ENCODE measurements at regions of chr1 and their contacts with region 1.

Region 1: DNA sequence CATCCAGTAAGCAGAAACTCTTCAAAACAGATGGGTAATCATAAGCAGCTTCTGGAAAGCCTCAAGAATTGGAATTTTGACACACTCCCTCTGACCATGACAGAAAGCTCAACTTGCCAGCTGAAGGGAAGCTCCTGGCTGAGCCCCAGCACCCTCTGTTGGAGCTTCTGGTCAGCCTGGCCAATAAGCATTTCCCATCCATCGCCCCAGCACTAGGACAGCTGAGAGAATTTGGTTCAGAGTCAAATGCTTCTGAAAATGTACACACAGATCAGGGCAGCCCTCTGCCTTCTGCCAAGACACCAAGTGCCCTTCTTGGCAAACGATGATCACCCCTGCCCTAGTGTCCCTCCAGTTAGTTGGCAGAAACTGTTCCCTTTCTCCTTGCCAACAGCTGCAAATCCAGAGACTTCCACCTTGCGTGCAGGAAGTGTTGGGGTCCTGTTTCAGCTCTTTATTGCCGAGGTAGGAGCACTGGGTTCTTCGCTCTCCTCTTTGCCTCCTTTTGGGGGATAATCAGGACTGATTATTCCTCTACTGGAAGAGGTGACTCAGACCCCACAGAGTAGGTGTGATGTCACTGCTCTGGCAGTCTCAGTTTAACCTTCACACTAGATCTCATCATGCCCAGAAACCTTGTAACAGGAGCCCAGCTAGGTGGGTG is 11.9 kb downstream of the PIGV start:
- DNase-seq: peak; percentile 48
- ATAC-seq: peak; percentile 78
- H3K4me3 Mint-ChIP-seq: no peak overlapping the region
- H3K27ac Mint-ChIP-seq: peak overlapping the region; percentile 90
- H3K4me1 Mint-ChIP-seq: peaks cover 37% of the 10 kb centered on the region
- H3K27me3 Mint-ChIP-seq: no peaks in the 10 kb centered on the region

Region 2: DNA sequence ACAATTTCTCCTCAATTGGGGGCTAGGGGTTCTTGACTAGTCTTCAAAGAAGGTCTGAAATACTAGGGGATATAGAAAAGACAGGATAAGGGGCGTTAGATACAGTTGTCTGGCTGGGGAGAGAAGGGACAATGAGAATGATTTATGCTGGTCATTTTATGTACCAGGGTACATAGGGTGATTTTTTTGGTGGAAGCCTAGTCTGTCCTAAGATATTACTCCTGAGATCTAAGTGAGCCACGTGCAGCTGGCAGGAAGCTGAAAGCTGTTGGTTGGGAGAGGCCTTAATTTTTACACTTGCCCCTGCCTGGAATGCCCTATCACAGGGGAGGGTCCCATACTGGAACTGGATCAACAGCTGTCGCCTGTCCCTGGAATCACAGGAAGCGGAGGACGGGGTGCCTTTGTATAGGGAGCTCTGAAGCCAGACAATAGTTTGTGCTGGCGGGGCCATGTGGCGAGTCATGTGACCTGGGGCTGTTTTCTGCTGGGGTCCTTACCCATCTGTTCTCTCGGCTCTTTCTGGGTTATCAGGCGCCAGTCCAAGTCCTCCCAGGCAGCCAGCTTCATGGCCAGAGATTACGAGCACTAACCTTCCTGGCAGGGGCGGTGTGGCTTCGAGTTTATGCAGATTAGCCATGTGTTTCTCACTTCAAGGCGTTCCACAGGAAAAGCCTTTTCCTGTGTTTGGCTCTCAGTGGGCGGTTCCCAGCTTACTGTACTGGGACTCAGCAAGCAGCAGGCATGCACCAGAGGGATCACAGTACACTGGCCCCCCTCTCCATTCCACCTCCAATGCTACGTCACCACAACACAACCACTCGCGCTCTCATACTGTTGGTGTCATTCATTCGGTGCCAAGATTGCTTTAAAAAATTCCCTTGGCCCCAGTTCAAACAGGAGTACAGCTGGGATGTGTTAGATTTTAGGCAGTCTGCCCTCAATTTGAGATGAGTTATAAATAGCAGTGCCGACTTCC is 76.3 kb before region 1 on chr1:
- CTCF ChIA-PET with region 1: no interaction called
- POLR2A ChIA-PET with region 1: no interaction called
- intact Hi-C with region 1: no loop called
- DNase-seq: peak; percentile 54
- ATAC-seq: peak; percentile 50
- H3K4me3 Mint-ChIP-seq: peak overlapping the region; percentile 34
- H3K27ac Mint-ChIP-seq: peak overlapping the region; percentile 82
- H3K4me1 Mint-ChIP-seq: peaks cover 95% of the 10 kb centered on the region
- H3K27me3 Mint-ChIP-seq: no peaks in the 10 kb centered on the region

Region 3: DNA sequence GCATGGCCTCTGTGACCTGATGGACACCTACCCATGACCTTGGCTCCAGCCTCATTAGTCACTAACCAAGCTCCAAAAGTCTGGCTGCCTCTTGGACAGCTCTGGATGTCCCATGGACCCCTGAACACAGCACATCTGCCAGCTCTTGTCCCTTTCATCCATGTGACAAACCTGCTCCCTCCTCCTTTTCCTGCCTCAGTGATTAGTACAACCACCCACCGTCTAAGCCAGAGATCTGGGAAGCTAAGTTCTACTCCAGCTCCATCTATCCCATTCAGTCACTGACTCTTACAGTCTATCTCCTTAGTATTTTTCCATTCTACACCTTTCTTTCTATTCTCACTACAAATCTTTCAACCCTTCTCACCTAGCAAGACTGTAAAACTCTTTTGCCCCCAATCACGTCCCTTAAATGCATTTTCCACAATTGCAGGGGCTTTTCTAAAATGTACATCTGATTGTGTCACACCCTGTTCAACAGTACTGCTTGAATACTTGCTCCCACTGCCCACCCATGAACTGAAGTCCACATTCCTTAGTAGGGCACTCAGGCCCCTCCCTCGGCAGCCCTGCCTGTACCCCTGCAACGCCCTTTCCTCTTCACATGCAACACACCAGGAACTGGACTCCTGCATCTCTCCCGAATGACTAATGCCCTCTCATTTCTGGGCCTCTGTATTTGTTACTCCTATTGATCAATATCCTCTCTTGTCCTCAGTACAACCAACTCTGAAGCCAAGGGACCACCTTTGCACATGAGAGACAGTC is 83.3 kb after region 1 on chr1:
- CTCF ChIA-PET with region 1: interaction called, 5 read pairs
- POLR2A ChIA-PET with region 1: interaction called, 11 read pairs
- intact Hi-C with region 1: loop called in 1 of 2 experiments (anchors 5 kb)
- DNase-seq: no peak
- ATAC-seq: no peak
- H3K4me3 Mint-ChIP-seq: no peak overlapping the region
- H3K27ac Mint-ChIP-seq: no peak overlapping the region
- H3K4me1 Mint-ChIP-seq: peaks cover 3% of the 10 kb centered on the region
- H3K27me3 Mint-ChIP-seq: no peaks in the 10 kb centered on the region

Region 4: DNA sequence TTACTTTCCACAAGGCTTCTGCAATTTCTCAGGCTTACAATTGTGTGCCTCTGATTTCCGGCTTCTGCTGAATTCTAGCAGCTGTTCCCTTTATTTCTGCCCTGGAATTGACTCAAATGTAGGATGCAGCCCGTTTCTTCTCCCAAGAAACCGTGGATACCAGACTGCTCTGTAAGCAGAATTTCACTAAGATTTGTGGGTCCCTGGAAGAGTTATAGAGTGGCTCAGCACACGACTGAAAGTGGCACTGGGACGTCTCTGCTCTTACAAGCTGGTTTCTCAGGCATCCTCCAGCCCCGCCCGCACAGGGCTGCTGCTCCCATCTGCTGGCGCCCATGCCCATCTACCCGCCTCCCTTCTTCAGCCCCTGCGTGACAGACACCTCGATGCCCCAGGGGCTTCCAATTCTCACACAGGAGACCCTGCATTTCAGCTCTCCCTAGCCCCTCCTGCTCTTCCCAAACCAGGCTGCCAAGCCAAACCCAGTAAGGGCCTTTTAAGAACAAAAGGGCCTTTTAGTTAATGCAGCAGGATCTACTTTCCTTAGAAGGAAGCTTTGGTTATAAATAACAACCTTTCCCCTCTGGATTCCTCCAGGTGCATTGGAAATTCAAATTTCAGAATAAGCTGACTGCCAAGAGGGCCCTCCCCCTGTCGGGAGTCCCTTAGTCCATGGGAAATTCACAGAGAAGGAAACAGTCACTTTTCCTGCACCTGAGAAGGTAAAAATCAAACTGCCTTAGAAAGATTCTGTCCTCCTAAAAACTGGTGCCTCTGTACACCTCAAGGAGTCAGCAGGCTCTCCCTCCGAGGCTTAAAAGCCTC is 258.4 kb after region 1 on chr1:
- CTCF ChIA-PET with region 1: no interaction called
- POLR2A ChIA-PET with region 1: no interaction called
- intact Hi-C with region 1: no loop called
- DNase-seq: no peak
- ATAC-seq: no peak
- H3K4me3 Mint-ChIP-seq: no peak overlapping the region
- H3K27ac Mint-ChIP-seq: no peak overlapping the region
- H3K4me1 Mint-ChIP-seq: no peaks in the 10 kb centered on the region
- H3K27me3 Mint-ChIP-seq: no peaks in the 10 kb centered on the region

Measured in activated CD4-positive, alpha-beta T cell treated with anti-CD3 and anti-CD28 coated beads for 36 hours (primary cell).